HEK293 (cell line): ENCODE measurements at regions of chr20 and their contacts with region 1.

Region 1: GRCh38 chr20:23937303-23938117 is 51.1 kb downstream of the GGTLC1 start:
- H3K4me3 ChIP-seq: no peak overlapping the region
- H3K27ac ChIP-seq: no peak overlapping the region
- H3K4me1 ChIP-seq: no peaks in the 10 kb centered on the region
- CTCF ChIP-seq: peak; percentile 78

Region 2: GRCh38 chr20:23889775-23890211 is 47.7 kb before region 1 on chr20:
- CTCF ChIA-PET with region 1: interaction called, 19 read pairs
- POLR2A ChIA-PET with region 1: no interaction called
- H3K4me3 ChIP-seq: no peak overlapping the region
- H3K27ac ChIP-seq: no peak overlapping the region
- H3K4me1 ChIP-seq: no peaks in the 10 kb centered on the region
- CTCF ChIP-seq: peak; percentile 79

Region 3: GRCh38 chr20:23954008-23954745 is 16.7 kb after region 1 on chr20:
- CTCF ChIA-PET with region 1: no interaction called
- POLR2A ChIA-PET with region 1: no interaction called
- H3K4me3 ChIP-seq: no peak overlapping the region
- H3K27ac ChIP-seq: no peak overlapping the region
- H3K4me1 ChIP-seq: no peaks in the 10 kb centered on the region
- CTCF ChIP-seq: no peak

Region 4: DNA sequence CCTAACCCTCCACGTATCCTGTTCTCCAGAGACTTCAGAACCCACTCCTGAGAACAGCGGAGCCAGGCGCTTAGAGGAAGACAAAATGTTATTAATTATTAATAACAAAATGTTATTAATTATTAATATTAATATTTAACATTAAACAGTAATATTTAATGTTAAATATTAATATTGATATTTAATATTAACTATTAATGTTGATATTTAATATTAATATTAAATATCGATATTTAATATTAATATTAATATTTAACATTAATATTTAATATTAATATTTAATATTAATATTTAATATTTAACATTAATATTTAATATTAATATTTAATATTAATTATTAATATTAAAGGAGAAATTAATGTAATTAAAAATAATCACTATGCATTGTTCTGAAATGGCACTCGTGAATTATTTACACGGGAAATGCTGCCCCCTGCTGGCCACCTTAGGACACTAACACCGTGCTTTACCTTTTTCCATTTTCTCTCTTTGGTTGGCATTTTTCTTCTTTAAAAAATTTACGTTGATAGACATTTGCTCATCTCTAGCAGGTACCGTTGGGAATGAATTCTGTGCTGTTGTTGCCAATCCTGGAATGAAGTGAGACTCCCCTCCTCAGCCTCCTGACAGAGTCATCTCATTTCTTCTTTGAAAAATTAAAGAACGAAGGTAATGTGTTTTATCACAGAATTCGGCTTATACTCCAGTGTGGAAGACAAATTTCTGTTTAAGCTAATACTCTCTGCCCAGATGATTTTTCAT is 58.6 kb after region 1 on chr20:
- CTCF ChIA-PET with region 1: interaction called, 11 read pairs
- POLR2A ChIA-PET with region 1: no interaction called
- H3K4me3 ChIP-seq: no peak overlapping the region
- H3K27ac ChIP-seq: no peak overlapping the region
- H3K4me1 ChIP-seq: no peaks in the 10 kb centered on the region
- CTCF ChIP-seq: no peak

Region 5: DNA sequence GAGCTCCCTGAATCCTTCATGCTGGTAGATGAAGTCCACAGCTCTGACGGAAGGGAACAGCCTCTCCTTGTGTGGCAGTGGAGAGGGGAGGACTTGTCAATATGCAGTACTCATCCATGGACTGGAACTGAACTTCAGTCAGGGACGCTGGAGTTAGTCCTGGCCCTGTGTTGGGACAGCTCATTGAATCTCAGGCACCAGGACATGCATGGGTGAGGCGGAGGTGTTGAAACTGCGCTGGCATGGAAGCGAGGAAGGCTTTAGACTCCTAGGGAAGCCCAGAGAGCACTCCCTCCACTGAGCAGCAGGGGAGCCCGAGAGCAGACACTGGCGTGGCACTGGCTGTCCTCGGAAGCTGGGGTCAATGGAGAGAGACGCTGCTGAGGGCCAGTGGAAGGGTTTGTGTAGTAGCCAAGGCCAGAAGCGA is 212.4 kb after region 1 on chr20:
- CTCF ChIA-PET with region 1: interaction called, 10 read pairs
- POLR2A ChIA-PET with region 1: no interaction called
- H3K4me3 ChIP-seq: no peak overlapping the region
- H3K27ac ChIP-seq: no peak overlapping the region
- H3K4me1 ChIP-seq: no peaks in the 10 kb centered on the region
- CTCF ChIP-seq: no peak

Region 6: DNA sequence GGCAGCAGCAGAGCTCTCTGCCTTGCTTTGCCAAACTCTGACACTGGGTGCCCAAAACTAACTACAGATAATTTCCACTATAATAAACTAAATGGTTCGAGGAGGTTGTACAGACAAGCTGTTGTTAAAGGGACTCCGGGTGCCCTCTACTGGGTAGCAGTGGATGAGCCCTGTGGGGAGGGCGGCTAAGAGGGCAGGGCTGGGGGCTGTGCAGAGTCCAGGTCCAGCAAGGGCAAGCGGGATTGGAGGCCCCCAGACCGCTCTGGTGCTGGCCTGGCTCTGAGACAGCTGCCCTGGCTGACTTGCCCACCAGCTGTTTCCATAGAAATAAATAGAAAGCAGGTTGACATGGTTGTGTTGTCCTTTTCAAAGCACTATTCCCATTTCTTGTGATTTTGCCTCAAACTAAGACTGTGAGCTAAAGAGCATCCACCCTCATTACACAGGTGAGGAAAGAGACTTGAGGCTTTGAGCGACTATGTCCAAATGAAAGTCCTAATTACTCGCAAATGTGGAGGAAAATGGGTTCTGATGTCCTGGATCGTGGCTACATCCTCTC is 844.0 kb after region 1 on chr20:
- CTCF ChIA-PET with region 1: interaction called, 10 read pairs
- POLR2A ChIA-PET with region 1: no interaction called
- H3K4me3 ChIP-seq: no peak overlapping the region
- H3K27ac ChIP-seq: no peak overlapping the region
- H3K4me1 ChIP-seq: no peaks in the 10 kb centered on the region
- CTCF ChIP-seq: no peak

Region 7: GRCh38 chr20:24917797-24918578 is 980.5 kb after region 1 on chr20:
- CTCF ChIA-PET with region 1: interaction called, 15 read pairs
- POLR2A ChIA-PET with region 1: no interaction called
- H3K4me3 ChIP-seq: no peak overlapping the region
- H3K27ac ChIP-seq: no peak overlapping the region; the same call in 1 of the 2 replicates
- H3K4me1 ChIP-seq: no peaks in the 10 kb centered on the region
- CTCF ChIP-seq: peak; percentile 91